Activated CD4-positive, alpha-beta memory T cell treated with anti-CD3 and anti-CD28 coated beads for 36 hours (primary cell): ENCODE measurements at regions of chr1 and their contacts with region 1.

Region 1: DNA sequence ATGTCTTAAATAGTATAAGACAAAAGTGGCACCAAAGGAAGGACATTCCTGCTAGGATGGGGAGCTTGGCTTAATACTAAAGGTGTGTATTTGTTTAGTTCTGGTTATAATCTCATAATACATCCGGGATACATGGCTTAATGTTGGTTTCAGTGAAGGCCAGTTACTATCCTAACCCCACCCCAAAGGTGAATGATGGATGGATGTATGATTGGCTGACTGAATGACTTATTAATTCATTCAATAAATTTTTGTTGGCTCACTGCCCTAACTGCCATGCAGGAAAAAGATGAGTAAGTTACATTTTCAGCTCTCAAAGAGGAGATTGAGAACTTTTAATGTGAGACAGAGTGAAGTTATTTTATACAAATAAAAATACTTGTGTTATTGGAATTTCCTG is 52.2 kb downstream of the PHACTR4 start:
- DNase-seq: no peak
- H3K4me3 Mint-ChIP-seq: no peak overlapping the region
- H3K27ac Mint-ChIP-seq: no peak overlapping the region
- H3K4me1 Mint-ChIP-seq: peaks cover 16% of the 10 kb centered on the region
- H3K27me3 Mint-ChIP-seq: no peaks in the 10 kb centered on the region

Region 2: GRCh38 chr1:28437934-28438699 is 16.4 kb after region 1 on chr1:
- CTCF ChIA-PET with region 1: interaction called, 3 read pairs
- POLR2A ChIA-PET with region 1: no interaction called
- intact Hi-C with region 1: loop called (anchors 2 kb)
- DNase-seq: peak; percentile 18
- H3K4me3 Mint-ChIP-seq: no peak overlapping the region
- H3K27ac Mint-ChIP-seq: no peak overlapping the region
- H3K4me1 Mint-ChIP-seq: peaks cover 21% of the 10 kb centered on the region
- H3K27me3 Mint-ChIP-seq: no peaks in the 10 kb centered on the region